ENCODE measurements at regions of chr7 and their contacts with region 1.

Region 1: DNA sequence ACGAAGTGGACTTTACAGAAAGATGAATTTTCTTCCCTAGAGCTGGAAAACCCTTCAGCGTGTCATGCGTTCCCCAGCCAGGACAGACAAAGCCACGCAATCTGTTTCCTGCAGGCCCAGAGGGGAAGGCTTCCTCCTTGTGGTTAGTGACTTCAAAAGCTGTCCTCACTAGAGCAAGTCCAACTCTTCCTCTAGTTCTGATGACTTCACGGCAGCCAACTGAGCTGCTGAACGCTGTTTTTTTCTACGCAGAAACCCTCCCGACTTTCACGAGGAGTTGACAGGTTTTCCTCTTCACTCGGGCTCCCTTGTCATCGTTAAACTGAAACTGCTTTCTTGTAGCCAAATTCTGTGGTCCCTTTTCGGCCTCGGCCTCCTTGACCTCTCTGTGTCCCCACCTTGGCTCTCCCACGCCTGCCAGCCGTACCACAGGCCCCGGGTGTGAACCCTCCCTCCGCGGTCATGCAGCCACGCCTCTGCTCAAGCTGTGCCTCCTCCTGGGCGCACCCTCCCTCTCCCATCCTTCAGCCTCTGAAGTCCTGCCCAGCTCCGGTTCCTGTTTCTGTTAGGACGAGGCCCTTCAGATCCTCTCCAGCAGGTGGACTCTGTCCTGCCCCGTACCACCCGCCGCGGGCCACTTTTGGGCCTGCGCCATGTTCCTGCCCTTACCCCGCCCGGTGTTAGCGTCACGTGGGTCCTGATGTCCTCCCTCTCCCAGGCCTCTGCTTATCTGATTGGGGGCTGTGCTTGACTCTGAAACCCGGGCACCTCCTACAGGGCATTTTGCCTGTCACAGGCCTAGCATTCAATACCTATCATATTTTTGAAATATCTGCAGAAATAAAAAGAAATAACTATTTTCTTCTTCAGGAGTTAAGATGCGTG is 39.3 kb downstream of the CUX1 start:
- DNase-seq: peak; percentile 77
- H3K4me3 Mint-ChIP-seq: peak overlapping the region; percentile 90
- H3K27ac Mint-ChIP-seq: peak overlapping the region; percentile 99
- H3K4me1 Mint-ChIP-seq: peaks cover 27% of the 10 kb centered on the region
- H3K27me3 Mint-ChIP-seq: no peaks in the 10 kb centered on the region

Region 2: DNA sequence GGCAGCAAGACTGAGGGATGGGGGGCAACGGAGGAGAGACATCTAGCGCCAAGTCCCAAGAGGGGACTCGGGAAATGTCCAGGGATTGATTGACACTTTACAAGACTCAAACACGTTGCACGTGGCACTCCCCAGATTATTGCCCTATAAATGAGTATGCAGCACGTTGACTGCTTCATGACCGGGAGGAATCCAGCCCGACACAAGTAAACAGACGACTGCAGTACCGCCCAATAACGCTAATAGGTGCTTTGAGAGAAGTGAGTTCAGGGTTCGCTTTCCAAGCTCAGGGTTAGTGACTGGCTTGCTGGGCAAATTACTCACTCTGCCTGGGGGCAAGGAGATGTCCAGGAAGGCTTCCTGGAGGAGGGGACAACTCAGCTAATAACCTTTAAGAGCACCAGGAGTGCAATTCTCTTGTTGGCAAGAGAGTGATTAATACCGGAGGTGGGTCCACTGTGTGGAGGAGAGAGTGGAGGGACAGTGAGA is 154.3 kb before region 1 on chr7:
- intact Hi-C with region 1: no loop called
- DNase-seq: no peak
- H3K4me3 Mint-ChIP-seq: no peak overlapping the region
- H3K27ac Mint-ChIP-seq: no peak overlapping the region
- H3K4me1 Mint-ChIP-seq: no peaks in the 10 kb centered on the region
- H3K27me3 Mint-ChIP-seq: peaks cover 1% of the 10 kb centered on the region

Region 3: GRCh38 chr7:101743241-101743994 is 113.3 kb before region 1 on chr7:
- intact Hi-C with region 1: loop called (anchors 2 kb)
- DNase-seq: peak; percentile 71
- H3K4me3 Mint-ChIP-seq: peak overlapping the region; percentile 76
- H3K27ac Mint-ChIP-seq: no peak overlapping the region
- H3K4me1 Mint-ChIP-seq: peaks cover 44% of the 10 kb centered on the region
- H3K27me3 Mint-ChIP-seq: no peaks in the 10 kb centered on the region

Measured in activated T-helper 2 cell treated with anti-CD3 and anti-CD28 coated beads, Interferon-gamma antibody, Interleukin-2, Interleukin-4, amounts not matched to agents 10 μg/mL and 5 μg/mL and 100 μg/mL, durations not matched to agents 14 hours and 24 hours and 36 hours (primary cell).